ENCODE measurements at regions of chr20 and their contacts with region 1.

Region 1: DNA sequence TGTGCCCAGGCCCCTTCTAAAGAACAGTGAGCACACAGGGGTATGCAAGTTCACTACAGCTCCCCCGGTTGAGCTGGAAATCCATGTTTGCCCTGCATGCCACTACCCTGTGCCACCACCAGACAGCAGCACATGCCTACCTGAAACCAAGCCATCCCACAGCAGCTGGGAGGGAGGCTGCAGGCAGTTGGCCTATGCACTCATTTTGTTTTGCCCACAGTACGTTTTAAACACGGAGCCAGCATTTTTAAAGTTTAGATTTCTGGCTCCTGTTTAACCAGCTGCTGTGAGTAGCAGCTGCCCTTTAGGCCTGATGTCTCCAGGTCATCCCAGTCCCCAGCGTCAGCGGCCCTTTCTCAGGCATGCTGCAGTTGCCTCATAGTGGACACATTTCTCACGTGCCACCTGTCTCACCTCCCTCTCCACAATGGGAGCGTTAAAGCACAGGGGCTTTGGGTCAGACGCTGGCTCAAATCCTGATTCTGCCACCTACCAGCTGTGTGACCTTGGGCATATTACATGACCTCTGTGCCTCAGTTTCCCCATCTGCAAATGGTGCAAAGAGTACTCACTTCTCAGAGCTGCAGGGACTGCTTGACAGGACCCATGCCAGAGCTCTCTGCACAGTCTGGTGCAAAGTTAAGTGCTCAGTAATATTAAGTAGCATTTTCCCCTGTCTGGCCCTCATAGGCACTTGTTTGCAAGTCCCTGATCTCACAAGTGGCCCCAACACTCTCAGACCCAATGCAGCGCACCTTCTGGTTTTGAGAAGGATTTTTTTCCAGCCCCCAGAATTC is 8.1 kb upstream of the UBE2V1 start:
- DNase-seq: peak; percentile 65 to 85
- ATAC-seq: peak; percentile 83 to 90 (median 88)
- H3K4me3 ChIP-seq: no peak overlapping the region
- H3K27ac ChIP-seq: peak overlapping the region; percentile 77
- H3K4me1 ChIP-seq: peaks cover 16% of the 10 kb centered on the region
- H3K27me3 ChIP-seq: no peaks in the 10 kb centered on the region
- CTCF ChIP-seq: peak; percentile 91

Region 2: DNA sequence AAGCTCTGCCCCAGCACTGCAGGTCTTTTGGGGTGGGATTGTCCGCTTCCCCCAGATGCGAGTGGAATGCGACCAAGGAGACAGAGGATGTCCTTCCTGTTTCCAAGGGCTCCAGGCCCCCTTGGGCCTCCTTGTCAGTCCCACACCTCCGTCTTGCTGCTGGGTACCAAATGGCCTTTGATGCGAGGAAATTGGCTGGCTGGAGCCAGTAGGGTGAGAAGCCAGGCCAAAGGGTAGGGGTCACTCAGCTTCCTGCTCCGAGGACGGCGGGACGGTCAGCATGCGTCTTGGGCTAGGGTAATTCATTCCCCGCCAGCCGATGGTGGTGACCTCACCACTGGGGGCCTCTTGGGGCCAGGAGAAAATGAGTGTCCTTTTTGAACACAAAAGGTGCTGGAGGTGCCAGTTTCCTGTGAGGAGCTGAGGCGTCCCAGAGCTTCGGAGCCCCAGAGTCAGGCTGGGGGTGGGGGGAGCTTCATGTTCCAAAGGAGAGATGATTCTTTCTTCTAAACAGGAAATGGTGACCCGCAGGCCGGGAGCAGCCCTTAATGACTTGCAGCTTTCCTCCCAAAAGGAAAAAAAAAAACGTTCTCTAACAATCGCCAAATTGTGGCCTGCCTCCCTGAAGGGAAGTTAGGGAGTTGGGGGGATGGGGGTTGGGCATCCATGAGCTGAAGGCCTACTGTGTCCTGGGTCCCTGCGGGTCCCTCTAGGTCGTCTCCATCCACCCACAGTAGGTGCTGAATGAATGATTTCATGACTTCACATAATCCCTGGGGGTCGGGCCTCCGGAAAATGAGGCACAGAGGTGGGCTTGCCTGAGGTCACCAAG is 131.6 kb before region 1 on chr20:
- intact Hi-C with region 1: no loop called
- DNase-seq: peak; percentile 70 to 84
- ATAC-seq: peak; percentile 26 to 60 (median 32)
- H3K4me3 ChIP-seq: peak overlapping the region; percentile 3
- H3K27ac ChIP-seq: peak overlapping the region; percentile 66
- H3K4me1 ChIP-seq: peaks cover 19% of the 10 kb centered on the region
- H3K27me3 ChIP-seq: no peaks in the 10 kb centered on the region
- CTCF ChIP-seq: no peak

Region 3: DNA sequence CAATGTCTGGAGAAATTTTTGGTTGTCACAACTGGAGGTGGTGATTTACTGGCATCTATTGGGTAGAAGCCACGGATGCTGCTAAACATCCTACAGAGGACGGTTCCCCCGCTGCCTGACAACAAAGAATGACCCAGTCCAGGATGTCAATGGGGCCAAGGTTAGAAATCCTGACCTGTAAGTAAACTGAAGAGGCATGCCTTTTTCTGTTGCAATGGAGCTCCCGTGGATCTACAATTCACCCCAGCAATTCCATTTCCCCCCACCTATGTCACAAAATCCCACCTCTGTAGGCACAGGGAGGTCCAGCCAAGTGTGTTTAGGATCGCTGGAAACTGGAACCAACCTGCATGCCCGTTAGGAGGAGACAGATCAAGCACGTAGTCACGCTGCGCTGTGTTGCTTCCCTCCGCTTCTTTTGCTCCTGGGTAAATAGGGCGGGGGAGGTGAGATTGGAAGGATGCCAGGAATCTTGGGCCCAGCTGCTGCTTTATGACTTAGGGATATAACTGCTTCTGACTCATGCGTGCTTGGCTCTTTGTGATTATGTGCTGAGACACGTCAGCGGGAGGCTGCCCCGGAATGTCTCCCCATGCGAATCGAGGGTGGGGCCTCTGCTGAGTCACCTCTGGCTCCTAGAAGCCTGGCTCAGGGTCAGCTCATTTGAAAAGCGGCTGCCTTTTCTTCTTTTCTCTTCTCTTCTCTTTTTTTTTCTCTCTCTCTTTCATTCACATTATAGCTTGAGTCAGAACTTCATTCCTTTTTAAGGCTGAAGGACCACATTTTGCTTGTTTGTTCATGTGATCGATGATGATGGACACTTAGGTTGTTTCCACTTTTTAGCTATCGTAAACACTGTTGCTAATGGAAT is 44.8 kb after region 1 on chr20:
- intact Hi-C with region 1: loop called (anchors 1 to 2 kb)
- DNase-seq: peak; percentile 97 to 98
- ATAC-seq: peak; percentile 94 to 95 (median 95)
- H3K4me3 ChIP-seq: peak overlapping the region; percentile 54
- H3K27ac ChIP-seq: peak overlapping the region; percentile 92
- H3K4me1 ChIP-seq: peaks cover 39% of the 10 kb centered on the region
- H3K27me3 ChIP-seq: no peaks in the 10 kb centered on the region
- CTCF ChIP-seq: no peak

Measured in psoas muscle (tissue), 8 donors.